Dorsolateral prefrontal cortex (tissue), 120 donors: ENCODE measurements at regions of chr6 and their contacts with region 1.

Region 1: DNA sequence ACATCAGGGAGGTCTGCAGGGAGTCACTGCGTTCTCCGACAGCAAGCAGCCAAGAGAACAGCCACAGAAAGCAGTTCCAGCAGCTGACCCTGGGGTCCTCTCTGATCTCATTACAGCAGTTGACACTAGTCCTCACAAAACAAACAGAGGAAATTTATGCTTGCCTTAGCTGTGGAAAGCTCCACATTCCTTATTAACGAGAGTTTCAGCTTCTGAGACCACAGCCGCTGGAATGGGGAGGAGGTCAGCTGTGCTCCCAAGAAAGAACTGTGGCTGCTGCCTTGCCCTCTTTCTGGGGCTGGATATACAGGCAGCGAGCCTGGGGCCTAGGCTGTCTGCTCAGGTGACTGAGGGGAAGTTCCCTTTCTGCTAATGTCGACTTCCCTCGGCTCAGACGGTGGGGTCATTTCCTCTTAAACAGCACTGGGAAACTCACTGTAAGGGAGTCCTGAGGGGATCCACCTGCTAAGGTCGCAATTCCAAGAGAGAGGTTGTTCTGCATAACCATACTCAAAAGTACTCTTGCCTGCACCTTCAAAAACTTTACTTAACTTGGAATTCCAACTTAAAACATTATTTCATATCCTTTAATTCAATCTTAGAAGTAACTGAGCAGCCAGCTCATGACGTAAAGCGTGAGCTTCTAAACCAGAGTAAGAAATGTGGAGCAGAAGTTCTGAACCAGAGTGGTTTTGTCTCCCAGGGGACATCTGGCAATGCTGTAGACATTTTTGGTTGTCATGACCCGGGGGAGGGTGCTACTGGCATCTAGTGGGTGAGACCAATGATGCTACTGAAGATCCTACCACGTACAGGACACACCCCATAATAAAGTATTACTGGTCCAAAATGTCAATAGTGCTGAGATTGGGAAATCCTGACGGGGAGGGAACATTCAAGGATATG is 80.3 kb downstream of the BACH2 start:
- DNase-seq: no peak
- H3K4me3 ChIP-seq: no peak overlapping the region
- H3K27ac ChIP-seq: peak overlapping the region in 28 of 59 donors; percentile 2 to 81 (median 32)
- H3K27me3 ChIP-seq: no peaks in the 10 kb centered on the region
- CTCF ChIP-seq: no peak

Region 2: DNA sequence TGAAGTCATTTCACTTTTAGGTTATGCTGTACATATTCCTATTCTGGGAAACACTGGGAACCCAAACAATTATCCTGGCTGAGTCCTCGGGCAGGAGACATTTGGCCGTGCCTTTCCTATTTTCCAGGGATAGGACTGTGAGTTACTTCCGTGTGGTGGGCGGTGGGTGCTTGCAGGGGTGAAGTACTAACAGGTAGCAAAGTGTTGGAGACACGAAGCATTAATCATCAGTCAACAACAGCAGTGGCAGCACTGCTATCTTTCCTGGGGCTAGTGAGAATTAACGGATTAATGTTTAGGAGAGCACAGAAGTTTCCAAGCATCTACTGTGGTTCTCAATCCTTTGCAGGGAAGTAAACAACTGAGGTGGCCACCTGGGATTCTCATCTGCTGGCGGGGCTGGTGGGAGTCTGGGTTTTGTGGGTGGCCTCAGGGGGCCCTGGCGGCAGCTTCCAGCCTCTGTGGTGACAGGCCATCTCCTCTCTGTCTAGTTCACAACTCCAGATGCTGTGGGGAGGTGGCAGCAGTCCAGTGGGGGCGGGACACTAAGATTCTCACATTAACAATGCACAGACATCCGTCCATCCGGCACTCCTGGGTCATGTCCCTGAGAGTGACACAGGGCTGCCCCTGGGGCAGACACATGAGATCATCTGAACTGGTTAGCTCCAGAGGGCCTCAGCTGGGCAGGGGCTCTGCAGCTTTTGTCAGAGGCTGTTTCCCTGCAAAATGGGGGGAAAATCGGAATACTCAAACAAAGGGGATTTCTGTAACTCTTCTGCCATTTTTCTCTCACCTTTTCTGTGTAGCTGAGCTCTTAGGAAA is 231.2 kb before region 1 on chr6:
- intact Hi-C with region 1: loop called in 1 of 2 experiments (anchors 5 kb)
- DNase-seq: peak; percentile 25 to 97 (median 86)
- H3K4me3 ChIP-seq: peak overlapping the region in 45 of 59 donors; percentile 0 to 59 (median 34)
- H3K27ac ChIP-seq: peak overlapping the region in 57 of 59 donors; percentile 7 to 92 (median 77)
- H3K27me3 ChIP-seq: no peaks in the 10 kb centered on the region
- CTCF ChIP-seq: peak in 6 of 56 donors; percentile 10 to 23 (median 18)

Region 3: DNA sequence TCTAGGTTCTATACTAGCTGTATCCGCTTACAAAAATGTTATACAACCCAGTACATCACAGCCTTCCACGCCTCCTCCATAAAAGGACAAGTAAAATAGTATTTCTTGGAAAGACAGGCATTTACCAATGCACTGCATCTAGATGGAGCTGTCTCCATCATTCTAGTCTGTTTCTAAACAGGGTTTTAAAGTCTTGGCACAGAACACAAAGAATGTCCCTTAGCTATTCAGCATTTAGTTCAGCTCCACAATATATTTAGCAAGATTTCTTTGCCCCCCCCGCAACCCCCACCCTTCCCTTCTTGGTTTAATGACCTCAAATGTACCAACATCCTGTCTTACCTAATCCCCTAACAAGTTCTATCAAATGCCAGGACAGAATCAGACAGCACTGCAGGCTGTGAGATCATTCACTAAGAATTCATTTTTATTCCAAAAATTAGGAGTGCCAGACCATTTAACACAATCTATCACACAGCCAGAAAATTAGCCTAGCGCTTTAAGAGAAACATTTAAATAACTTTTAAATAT is 118.3 kb before region 1 on chr6:
- intact Hi-C with region 1: loop called in 1 of 2 experiments (anchors 5 kb)
- DNase-seq: peak in 1 of 10 donors; percentile 24
- H3K4me3 ChIP-seq: peak overlapping the region in 7 of 59 donors; percentile 1 to 32 (median 18)
- H3K27ac ChIP-seq: peak overlapping the region in 24 of 59 donors; percentile 1 to 70 (median 30)
- H3K27me3 ChIP-seq: no peaks in the 10 kb centered on the region
- CTCF ChIP-seq: peak in 55 of 56 donors; percentile 23 to 74 (median 56)

Region 4: DNA sequence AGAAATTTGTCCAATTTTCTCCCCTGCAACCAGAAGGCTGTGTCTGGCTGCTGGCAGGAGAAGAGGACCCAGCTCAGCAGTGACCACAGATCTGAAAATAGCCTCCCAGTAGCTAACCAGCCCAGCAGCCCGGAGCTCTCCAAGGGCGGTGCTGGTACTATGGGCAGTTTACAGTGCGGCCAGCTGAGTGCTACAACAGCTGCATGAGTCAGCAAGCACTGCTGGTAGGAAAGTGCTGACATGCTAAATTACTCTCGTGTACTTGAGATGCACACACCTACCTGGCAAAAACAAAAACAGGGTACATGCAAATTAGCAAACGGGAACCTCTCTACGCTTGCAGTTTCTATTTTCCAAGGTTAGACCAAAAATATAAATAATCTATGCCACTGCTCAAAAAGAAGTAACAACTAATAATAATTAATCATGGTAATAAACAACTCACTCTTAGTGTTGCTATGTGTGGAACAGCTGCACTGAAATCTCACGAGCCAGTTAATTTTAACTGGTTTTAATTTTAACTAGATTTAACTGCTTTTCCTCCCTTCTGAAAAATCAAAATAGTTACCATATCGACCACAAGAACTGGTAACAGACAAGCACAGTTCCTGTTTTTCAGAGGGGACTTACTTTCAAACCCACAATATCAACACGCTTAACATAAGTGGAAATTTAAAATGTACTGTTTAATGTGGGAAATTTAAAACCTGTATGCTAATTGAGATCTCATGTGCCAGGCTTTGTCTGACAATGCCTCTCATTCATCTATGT is 69.5 kb after region 1 on chr6:
- intact Hi-C with region 1: loop called in 1 of 2 experiments (anchors 2 kb)
- DNase-seq: peak; percentile 55 to 84 (median 78)
- H3K4me3 ChIP-seq: peak overlapping the region in 53 of 59 donors; percentile 7 to 58 (median 33)
- H3K27ac ChIP-seq: peak overlapping the region in 21 of 59 donors; percentile 0 to 60 (median 39)
- H3K27me3 ChIP-seq: no peaks in the 10 kb centered on the region
- CTCF ChIP-seq: peak in 7 of 56 donors; percentile 9 to 40 (median 27)

Region 5: GRCh38 chr6:90478789-90479602 is 262.7 kb after region 1 on chr6:
- intact Hi-C with region 1: loop called in 1 of 2 experiments (anchors 2 kb)
- DNase-seq: peak; percentile 59 to 94 (median 86)
- H3K4me3 ChIP-seq: peak overlapping the region in 34 of 59 donors; percentile 2 to 46 (median 23)
- H3K27ac ChIP-seq: peak overlapping the region in 35 of 59 donors; percentile 2 to 79 (median 48)
- H3K27me3 ChIP-seq: no peaks in the 10 kb centered on the region
- CTCF ChIP-seq: peak; percentile 78 to 99 (median 95)